Heart right ventricle (tissue), 16 donors: ENCODE measurements at regions of chr14 and their contacts with region 1.

Region 1: DNA sequence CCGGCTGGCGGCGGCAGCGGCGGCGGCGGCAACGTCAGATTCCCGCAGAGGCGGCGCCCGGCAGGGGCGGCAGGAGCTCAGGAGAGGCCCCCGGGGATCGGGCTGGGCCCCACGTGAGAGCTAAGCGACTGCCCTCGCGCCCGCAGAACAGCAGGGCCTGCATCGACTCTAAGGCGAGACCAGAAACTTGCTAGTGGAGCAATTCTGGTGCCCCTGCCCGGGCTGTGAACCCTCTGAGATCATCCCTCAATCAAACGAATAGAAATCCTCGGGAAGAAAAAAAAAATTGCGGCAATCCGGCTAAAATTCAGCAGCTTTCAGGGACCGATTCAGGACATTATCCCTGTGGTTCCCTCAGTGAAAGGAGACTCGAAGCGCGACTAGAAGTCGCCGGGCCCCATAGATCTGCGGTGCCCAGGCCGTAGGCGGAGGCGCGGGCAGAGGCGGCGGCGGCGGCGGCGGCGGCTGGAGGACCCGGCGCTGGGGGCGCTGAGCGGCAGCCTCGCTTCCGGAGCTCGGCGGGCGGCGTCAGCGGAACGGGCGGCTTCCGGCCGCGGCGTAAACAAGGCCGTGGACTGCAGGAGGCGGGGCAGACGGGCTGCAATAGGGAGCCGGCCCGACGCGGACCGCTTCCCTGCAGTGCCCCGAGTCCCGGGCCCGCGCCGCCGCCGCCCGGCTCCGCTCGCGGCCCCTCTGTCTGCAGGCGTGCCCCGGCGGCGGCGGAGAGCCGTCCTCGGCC is at the start of gene KLHDC2:
- DNase-seq: peak; percentile 89 to 93
- ATAC-seq: peak; percentile 90 to 97 (median 96)
- H3K4me3 ChIP-seq: peak within 1 kb of the TSS; percentile 73 to 99 (median 97)
- H3K27ac ChIP-seq: peak within 1 kb of the TSS; percentile 89 to 99 (median 98)
- H3K4me1 ChIP-seq: peaks cover 2 to 35% (median 31%) of the 10 kb centered on the region in 9 donors
- H3K27me3 ChIP-seq: no peaks in the 10 kb centered on the region
- CTCF ChIP-seq: peak in 6 of 9 donors; percentile 19 to 67 (median 36)
- total RNA-seq, gene KLHDC2: 68.9 to 106 (median 83.8) TPM

Region 2: DNA sequence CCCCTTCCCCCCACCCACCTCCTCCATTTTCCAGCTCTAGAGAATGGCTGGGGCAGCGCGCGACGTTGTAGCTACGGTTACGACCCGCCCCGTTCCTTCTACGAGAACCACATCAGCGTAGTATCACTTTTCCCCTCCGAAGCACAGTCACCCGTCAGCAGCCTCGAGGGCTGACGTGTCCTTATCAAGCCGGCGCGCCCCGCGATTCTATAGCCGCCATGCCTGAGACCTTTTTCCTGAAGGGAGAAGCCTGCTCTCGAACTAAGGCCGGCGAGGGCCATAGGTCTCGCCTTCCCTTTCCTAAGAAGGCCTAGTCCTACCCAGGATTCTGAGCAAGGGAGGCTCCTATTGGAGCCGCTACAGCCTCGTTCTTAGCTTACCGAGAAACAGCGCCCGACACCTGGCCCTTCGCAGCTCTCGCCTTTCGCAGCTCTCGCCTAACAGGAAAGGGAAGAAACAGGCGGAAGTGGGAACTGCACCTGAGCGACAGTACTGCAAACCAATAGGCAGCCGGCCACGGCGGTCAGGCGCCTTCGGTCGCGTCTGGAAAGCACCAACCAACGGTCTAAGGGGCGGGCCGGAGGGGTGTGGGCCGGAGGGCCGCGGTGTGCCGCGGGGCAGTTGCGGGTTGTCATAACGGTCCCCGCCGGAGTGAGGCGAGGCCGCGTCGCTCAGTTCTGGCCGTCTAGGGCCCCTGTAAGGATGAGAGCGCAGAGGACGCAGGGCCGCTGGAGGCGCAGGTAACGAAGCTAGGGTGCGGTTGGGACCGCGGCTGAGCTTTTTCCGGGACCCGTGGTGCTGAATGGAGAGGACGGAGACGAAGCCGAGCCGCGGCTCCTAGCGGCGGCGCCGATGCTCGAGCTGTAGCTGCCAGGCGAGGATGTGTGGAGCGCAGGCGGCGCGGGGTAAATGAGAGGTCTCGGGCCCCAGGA is 147.3 kb before region 1 on chr14 and contains the starts of genes MGAT2 and RPL36AL:
- intact Hi-C with region 1: loop called in 1 of 10 experiments (anchors 5 kb)
- DNase-seq: peak; percentile 99
- ATAC-seq: peak; percentile 99 to 100 (median 100)
- H3K4me3 ChIP-seq: peak within 1 kb of the TSS; percentile 63 to 97 (median 90)
- H3K27ac ChIP-seq: peak within 1 kb of the TSS; percentile 72 to 98 (median 94)
- H3K4me1 ChIP-seq: peaks cover 0 to 64% (median 41%) of the 10 kb centered on the region in 9 donors
- H3K27me3 ChIP-seq: no peaks in the 10 kb centered on the region
- CTCF ChIP-seq: peak in 5 of 9 donors; percentile 15 to 52 (median 46)
- total RNA-seq, gene MGAT2: 9.7 to 23.4 (median 14.3) TPM
- total RNA-seq, gene RPL36AL: 103 to 164 (median 127) TPM

Region 3: DNA sequence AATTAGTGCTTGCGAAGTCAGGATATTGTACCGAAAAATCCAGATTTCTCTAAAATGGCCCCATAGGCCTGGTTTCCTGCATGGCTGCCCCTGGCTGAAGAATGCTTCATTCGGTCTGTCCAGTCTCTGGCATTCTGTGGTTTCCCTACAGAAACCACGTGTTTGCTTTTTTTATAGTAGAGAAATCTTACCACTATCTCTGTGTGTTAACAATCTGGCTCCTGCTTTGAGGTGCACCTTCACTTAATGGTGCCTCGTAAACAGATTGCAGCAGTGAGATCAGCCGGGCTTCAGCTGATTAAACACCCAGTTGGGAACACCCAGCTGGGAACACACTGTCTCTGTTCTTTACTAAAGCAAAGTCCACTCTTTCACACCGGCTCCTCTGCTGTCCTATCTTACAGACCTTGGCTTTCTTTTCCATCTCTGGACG is 126.0 kb before region 1 on chr14:
- intact Hi-C with region 1: loop called in 4 of 10 experiments (anchors 5 to 10 kb)
- DNase-seq: no peak
- ATAC-seq: peak in 7 of 8 donors; percentile 37 to 96 (median 64)
- H3K4me3 ChIP-seq: no peak overlapping the region
- H3K27ac ChIP-seq: peak overlapping the region in 9 of 10 donors; percentile 2 to 62 (median 31)
- H3K4me1 ChIP-seq: peaks cover 0 to 43% (median 18%) of the 10 kb centered on the region in 9 donors
- H3K27me3 ChIP-seq: no peaks in the 10 kb centered on the region
- CTCF ChIP-seq: no peak

Region 4: DNA sequence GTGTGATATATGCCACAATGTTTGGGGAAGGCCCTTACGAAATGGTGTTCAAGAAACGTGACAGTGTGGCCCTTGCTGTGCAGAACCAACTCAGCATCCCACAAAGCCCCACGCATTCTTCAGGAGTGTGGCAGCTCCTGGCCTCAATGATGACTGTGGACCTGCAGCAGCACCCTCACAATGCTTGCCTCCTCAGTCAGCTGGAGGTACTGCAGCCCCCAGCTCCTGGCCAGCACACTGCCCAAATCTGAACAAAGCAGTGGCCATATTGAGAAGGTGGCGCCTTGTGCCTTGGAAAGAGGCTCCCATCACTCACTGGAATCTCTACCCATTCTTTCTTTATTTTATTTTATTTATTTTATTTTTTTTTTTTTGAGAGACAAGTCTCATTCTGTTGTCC is 90.1 kb before region 1 on chr14:
- intact Hi-C with region 1: no loop called
- DNase-seq: no peak
- ATAC-seq: no peak
- H3K4me3 ChIP-seq: no peak overlapping the region
- H3K27ac ChIP-seq: no peak overlapping the region
- H3K4me1 ChIP-seq: no peaks in the 10 kb centered on the region
- H3K27me3 ChIP-seq: no peaks in the 10 kb centered on the region
- CTCF ChIP-seq: no peak

Region 5: DNA sequence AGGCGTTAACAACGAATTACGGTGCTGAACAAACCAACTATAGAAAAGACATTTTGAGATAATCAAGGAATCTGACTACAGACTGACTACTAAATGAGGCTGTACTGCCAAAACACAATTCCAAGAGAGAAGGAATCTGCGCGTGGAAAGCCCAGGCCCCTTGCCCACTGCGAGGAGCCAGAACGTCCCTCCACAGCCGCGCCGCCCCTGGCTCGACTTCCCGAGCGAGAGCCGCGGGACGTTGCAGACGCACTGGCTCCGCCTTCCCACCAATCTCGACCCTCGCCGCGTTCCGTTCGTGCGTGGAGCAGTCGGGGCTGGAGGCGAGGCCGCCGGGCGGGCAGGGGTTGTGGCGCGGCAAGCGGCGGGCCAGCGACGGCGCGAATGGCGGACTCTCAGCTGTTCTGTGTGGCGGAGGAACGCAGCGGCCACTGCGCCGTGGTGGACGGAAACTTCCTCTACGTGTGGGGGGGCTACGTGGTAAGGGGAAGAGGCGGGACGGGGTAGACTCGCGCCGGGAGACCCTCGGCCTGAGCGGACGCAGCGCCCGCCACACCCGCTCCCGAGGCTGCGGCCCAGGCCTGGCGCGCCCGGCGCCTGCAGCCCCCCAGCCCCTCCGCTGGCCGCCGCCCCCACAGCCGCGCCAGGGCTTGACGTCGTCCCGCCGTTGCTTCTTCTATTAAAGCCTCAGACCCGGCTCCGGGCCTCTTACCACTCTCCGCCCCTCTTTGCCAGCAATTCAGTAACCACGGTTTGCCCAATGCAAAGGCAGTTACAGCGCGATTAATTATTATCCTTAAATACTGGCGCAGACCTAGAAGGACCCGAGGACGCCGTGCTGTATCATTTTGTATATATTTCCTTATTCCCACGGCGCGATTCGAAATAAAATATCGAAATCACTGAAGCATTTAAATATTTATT is 74.7 kb before region 1 on chr14 and contains the start of gene KLHDC1:
- intact Hi-C with region 1: loop called in 3 of 10 experiments (anchors 2 to 5 kb)
- DNase-seq: peak; percentile 90 to 93
- ATAC-seq: peak; percentile 91 to 96 (median 94)
- H3K4me3 ChIP-seq: peak within 1 kb of the TSS; percentile 36 to 88 (median 72)
- H3K27ac ChIP-seq: peak within 1 kb of the TSS; percentile 85 to 99 (median 95)
- H3K4me1 ChIP-seq: peaks cover 6 to 33% (median 17%) of the 10 kb centered on the region in 9 donors
- H3K27me3 ChIP-seq: no peaks in the 10 kb centered on the region
- CTCF ChIP-seq: no peak
- total RNA-seq, gene KLHDC1: 5.0 to 8.1 (median 7.4) TPM

Region 6: DNA sequence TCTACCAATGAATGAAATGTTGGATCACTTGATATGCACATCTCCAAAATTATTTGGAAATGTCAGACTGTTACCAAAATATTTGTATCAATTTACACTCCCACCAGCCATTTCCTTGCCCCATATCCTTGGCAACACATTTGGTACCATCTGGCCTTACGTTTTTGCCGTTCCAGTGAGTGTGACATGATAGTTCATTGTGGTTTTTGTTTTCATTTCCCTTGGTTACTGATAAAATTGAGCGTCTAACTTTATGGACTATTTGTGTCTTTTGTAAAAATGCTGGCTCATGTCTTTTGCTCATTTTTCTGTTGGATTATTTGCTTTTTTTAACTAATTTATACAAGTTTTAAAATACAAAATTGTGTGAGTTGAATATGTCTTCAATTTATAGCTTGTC is 63.8 kb before region 1 on chr14:
- intact Hi-C with region 1: loop called in 1 of 10 experiments (anchors 10 kb)
- DNase-seq: no peak
- ATAC-seq: no peak
- H3K4me3 ChIP-seq: no peak overlapping the region
- H3K27ac ChIP-seq: no peak overlapping the region
- H3K4me1 ChIP-seq: no peaks in the 10 kb centered on the region
- H3K27me3 ChIP-seq: no peaks in the 10 kb centered on the region
- CTCF ChIP-seq: no peak

Region 7: GRCh38 chr14:49828640-49829039 is 60.9 kb after region 1 on chr14:
- intact Hi-C with region 1: loop called in 1 of 10 experiments (anchors 10 kb)
- DNase-seq: no peak
- ATAC-seq: no peak
- H3K4me3 ChIP-seq: no peak overlapping the region
- H3K27ac ChIP-seq: no peak overlapping the region
- H3K4me1 ChIP-seq: no peaks in the 10 kb centered on the region
- H3K27me3 ChIP-seq: no peaks in the 10 kb centered on the region
- CTCF ChIP-seq: no peak